PC-9 (cell line): ENCODE measurements at regions of chr1 and their contacts with region 1.

Region 1: DNA sequence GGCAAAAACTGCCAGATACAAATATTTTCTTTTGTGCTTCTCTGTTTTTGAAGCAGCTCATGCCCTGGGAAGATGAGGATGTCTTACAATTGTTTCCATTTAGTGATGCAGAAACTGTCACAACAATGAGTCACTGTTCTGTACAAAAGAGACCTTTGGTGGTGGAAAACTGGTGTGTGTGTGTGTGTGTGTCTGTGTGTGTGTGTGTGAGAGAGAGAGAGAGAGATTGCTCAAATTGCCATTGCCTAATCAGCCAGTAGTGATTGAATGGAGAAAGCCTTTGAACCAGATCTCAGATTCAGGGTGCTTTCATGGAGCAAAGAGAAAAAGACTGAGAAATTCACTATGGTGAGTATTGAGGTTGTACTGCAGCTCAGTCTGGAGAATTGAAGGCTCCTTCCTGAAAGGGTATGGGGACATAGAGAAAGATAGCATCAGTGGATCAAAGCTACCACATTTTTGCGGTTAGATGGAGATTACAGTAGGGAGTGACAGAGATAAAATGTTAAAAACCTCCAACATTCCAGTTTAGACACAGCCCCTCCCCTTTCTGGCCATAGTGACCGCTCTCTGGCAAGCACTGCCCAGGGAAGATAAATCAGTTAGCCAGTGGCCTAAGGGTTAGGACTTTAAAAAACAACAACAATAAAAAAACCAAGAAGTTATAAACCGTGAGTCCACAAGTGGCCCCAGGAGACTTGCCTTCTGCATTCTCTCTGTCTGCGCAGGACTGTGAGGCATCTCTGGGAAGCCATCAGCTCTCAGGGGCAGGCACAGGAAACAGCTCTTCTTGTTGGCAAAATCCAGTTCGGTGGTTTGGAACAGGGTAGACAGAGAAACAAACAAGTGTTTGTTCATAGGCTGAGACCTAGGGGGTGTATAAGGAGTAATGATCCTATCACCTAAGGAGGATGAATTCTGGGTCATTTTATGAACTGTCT is 406.5 kb downstream of the DUSP10 start:
- DNase-seq: peak; percentile 82 to 90
- H3K4me3 ChIP-seq: no peak overlapping the region
- H3K27ac ChIP-seq: peak overlapping the region; percentile 67
- H3K4me1 ChIP-seq: peaks cover 29% of the 10 kb centered on the region
- H3K27me3 ChIP-seq: no peaks in the 10 kb centered on the region
- CTCF ChIP-seq: no peak

Region 2: DNA sequence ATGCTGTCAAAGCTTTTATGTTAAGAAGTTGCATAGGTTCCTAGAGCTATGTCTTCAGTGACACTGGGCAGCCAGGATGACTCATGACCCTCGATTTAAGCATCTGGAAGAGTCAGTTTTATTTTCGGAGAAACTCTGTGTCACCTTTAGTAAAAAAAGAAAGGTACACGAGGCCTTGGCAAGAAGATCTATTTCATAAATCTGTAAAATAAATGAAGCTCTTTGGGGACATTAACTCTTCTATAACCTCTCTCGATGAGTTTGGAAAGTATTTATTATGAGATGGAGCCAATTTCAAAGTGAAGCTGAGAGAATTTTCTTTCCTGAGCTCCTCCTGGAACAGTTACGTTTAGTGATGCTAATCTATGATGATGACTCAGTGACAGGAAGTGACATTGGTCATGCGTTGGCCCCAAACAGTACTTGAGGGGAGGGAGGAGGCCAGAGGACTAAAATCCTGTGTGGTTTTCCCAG is 299.7 kb before region 1 on chr1:
- CTCF ChIA-PET with region 1: no interaction called
- POLR2A ChIA-PET with region 1: no interaction called
- intact Hi-C with region 1: loop called (anchors 5 kb)
- DNase-seq: peak; percentile 36 to 53
- H3K4me3 ChIP-seq: peak overlapping the region; percentile 40; the same call in 1 of the 2 replicates
- H3K27ac ChIP-seq: peak overlapping the region; percentile 72
- H3K4me1 ChIP-seq: peaks cover 14% of the 10 kb centered on the region
- H3K27me3 ChIP-seq: no peaks in the 10 kb centered on the region
- CTCF ChIP-seq: no peak

Region 3: GRCh38 chr1:221239792-221240191 is 95.6 kb before region 1 on chr1:
- CTCF ChIA-PET with region 1: no interaction called
- POLR2A ChIA-PET with region 1: no interaction called
- intact Hi-C with region 1: no loop called
- DNase-seq: no peak
- H3K4me3 ChIP-seq: no peak overlapping the region
- H3K27ac ChIP-seq: no peak overlapping the region
- H3K4me1 ChIP-seq: peaks cover 12% of the 10 kb centered on the region; the same call in 1 of the 2 replicates
- H3K27me3 ChIP-seq: no peaks in the 10 kb centered on the region
- CTCF ChIP-seq: no peak

Region 4: GRCh38 chr1:221392453-221392852 is 57.0 kb after region 1 on chr1:
- CTCF ChIA-PET with region 1: no interaction called
- POLR2A ChIA-PET with region 1: no interaction called
- intact Hi-C with region 1: loop called (anchors 1 kb)
- DNase-seq: peak; percentile 33 to 67
- H3K4me3 ChIP-seq: no peak overlapping the region
- H3K27ac ChIP-seq: no peak overlapping the region
- H3K4me1 ChIP-seq: peaks cover 13% of the 10 kb centered on the region
- H3K27me3 ChIP-seq: no peaks in the 10 kb centered on the region
- CTCF ChIP-seq: no peak

Region 5: DNA sequence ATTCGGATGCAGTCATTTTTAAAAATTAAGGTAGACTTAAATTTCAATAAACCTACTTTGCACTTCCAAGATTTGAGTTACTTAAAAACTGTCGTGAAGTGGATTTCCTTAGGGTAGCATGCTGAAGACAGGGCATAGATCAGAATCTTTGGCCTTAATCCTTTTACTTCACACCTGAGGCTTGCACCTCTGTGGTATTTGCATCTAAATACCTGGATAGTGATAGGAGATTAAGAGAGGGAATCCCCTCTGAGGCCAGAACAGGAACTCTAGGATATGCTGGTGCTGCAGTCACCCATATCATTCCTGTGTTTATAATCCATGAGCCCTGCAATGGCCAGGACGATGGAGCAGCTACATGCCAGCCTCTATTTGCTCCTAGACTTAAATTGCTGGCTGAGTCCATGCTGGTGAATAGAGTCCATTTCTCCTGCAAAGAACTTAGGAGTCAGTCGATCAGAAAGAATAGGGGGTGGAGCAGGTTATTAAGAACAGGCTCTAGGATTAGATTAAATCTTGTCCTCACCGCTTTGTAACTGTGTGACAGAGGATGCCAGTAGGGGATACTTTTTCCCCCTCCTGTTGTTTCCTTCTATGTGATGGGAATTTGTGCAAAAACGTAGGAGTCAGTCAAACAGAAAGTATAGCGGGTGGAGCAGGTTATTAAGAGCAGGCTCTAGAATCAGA is 72.8 kb after region 1 on chr1:
- CTCF ChIA-PET with region 1: no interaction called
- POLR2A ChIA-PET with region 1: no interaction called
- intact Hi-C with region 1: no loop called
- DNase-seq: no peak
- H3K4me3 ChIP-seq: no peak overlapping the region
- H3K27ac ChIP-seq: no peak overlapping the region
- H3K4me1 ChIP-seq: no peaks in the 10 kb centered on the region
- H3K27me3 ChIP-seq: no peaks in the 10 kb centered on the region
- CTCF ChIP-seq: no peak

Region 6: GRCh38 chr1:221419513-221420088 is 84.2 kb after region 1 on chr1:
- CTCF ChIA-PET with region 1: no interaction called
- POLR2A ChIA-PET with region 1: no interaction called
- intact Hi-C with region 1: loop called (anchors 2 kb)
- DNase-seq: no peak
- H3K4me3 ChIP-seq: no peak overlapping the region
- H3K27ac ChIP-seq: no peak overlapping the region
- H3K4me1 ChIP-seq: 0 out of 2 replicates have a peak, but pooled peaks cover 6% of the 10 kb centered on the region
- H3K27me3 ChIP-seq: no peaks in the 10 kb centered on the region
- CTCF ChIP-seq: no peak

Region 7: GRCh38 chr1:221606256-221606655 is 270.8 kb after region 1 on chr1:
- CTCF ChIA-PET with region 1: no interaction called
- POLR2A ChIA-PET with region 1: no interaction called
- intact Hi-C with region 1: loop called (anchors 5 kb)
- DNase-seq: no peak
- H3K4me3 ChIP-seq: no peak overlapping the region
- H3K27ac ChIP-seq: 0 out of 2 replicates have a peak overlapping the region, but pooled peaks have one; percentile 44
- H3K4me1 ChIP-seq: peaks cover 51% of the 10 kb centered on the region
- H3K27me3 ChIP-seq: no peaks in the 10 kb centered on the region
- CTCF ChIP-seq: no peak

Region 8: GRCh38 chr1:221809031-221810029 is 473.9 kb after region 1 on chr1:
- CTCF ChIA-PET with region 1: no interaction called
- POLR2A ChIA-PET with region 1: no interaction called
- intact Hi-C with region 1: loop called (anchors 1 kb)
- DNase-seq: no peak
- H3K4me3 ChIP-seq: no peak overlapping the region
- H3K27ac ChIP-seq: peak overlapping the region; percentile 90
- H3K4me1 ChIP-seq: peaks cover 59% of the 10 kb centered on the region
- H3K27me3 ChIP-seq: no peaks in the 10 kb centered on the region
- CTCF ChIP-seq: no peak